GM10248 (cell line): ENCODE measurements at regions of chr4 and their contacts with region 1.

Region 1: DNA sequence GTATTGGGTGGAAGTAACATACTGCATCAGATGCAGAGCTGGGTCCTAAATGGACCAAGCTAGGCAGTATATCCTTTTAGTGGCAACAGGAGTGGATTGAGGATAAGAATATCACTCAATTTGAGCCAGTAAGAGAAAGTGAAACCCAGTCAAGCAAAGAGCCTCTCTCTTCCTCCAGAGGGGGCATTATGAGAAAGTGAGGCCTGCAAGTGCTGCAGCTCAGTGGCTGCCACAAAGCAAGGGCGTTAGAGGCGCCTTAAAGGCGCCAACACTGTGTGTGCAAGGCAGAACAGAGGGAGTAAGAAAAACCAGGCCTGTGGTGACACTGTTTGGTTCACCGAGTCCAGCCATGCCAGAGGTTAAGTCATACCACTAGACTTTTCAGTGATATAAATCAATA is 17.5 kb downstream of the STX18 start:
- DNase-seq: peak; percentile 64
- CTCF ChIP-seq: peak; percentile 22

Region 2: GRCh38 chr4:4507923-4508322 is 16.4 kb before region 1 on chr4:
- CTCF ChIA-PET with region 1: interaction called, 40 read pairs
- POLR2A ChIA-PET with region 1: no interaction called
- DNase-seq: no peak
- CTCF ChIP-seq: peak; percentile 32

Region 3: DNA sequence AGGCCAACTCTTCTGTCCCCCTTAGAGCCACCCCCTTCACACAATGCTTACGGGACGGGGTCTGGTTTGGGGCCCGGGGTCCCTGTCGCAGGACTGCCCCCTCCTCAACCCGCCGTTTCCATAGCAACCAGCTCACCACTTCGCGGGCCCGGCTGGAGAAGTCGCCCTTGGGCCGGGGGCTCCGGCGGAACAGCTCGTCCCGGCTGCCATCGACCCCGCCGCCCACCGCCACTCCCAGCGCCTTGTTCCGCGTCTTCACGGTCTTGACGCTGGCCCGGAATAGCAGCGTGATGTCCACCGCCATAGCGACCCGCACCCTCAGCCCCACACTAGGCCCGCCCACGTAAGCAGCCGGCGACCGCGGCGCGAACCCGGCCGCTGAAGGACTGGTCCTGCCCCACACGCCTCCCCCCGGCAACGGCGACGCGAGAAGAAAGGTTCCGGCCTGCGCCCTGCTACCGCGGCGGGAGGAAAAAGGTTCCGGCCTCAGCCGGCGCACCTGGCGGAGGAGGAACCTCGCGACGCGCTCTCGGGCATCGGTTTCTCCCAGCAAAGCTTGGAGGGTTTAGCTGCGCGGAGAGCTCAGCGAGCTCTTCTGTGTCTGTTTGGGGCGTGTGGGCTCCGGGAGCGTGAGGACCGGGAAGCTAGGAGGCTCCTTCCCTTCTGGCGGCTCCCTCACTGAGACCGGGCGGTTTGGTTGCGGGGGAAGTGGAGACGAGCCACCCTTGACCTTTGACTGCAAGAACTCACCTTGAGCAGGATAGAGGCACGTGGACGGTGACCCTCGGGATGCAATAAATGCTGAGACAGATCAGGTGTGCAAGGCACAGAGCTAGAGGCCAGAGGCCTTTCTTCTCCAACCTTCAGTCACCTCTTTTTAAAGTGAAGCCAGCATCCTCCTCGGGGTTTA is 17.6 kb after region 1 on chr4 and contains the start of gene STX18:
- CTCF ChIA-PET with region 1: interaction called, 34 read pairs
- POLR2A ChIA-PET with region 1: no interaction called
- DNase-seq: peak; percentile 91
- CTCF ChIP-seq: no peak

Region 4: GRCh38 chr4:4752576-4753401 is 228.4 kb after region 1 on chr4:
- CTCF ChIA-PET with region 1: no interaction called
- POLR2A ChIA-PET with region 1: no interaction called
- DNase-seq: no peak
- CTCF ChIP-seq: no peak